A549 (cell line): ENCODE measurements at regions of chr11 and their contacts with region 1.

Region 1: DNA sequence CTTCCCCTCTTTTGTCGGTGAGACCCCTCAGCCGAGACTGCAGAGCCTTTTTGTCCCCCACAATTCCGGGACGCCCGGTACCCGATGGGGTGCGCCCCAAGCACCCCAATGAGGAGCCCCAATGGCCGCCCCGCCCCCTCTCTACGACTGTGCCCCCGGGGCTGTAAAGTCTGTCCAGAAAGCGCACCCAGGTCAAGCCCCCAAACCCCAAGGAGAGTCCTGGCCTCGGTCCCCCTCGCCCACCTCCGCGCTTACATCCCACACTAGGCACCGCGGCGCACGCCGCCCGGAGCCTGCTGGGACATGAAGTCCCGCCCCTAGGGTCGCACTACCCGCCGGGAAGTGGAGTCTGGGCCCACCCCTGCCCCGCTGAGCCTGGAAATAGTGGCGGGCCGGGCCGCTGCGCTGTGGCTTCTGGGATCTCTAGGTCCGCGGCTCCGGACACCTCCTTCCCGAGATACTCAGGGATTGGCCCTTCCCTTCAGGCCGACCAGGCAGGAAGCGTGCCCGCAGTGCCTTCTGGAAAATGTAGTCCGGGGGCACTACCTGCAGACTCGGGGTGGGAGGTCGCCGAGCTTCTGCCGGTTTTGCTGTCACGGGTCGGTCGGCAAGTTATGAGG is at the start of gene MEN1:
- DNase-seq: peak; percentile 96 to 98
- ATAC-seq: peak; percentile 98 to 100
- H3K4me3 ChIP-seq: peak within 1 kb of the TSS; percentile 92
- H3K27ac ChIP-seq: peak within 1 kb of the TSS; percentile 91 to 93
- H3K4me1 ChIP-seq: peaks cover 6% of the 10 kb centered on the region; the same call in 2 of the 3 replicates
- CTCF ChIP-seq: no peak
- EP300 ChIP-seq: no peak
- POLR2A ChIP-seq: peak; percentile 83
- RAD21 ChIP-seq: no peak
- polyA plus RNA-seq, gene MEN1: 17.0 and 18.5 TPM in 2 replicates

Region 2: GRCh38 chr11:64698427-64698826 is 112.0 kb before region 1 on chr11:
- CTCF ChIA-PET with region 1: no interaction called
- POLR2A ChIA-PET with region 1: no interaction called
- DNase-seq: no peak
- ATAC-seq: no peak
- H3K4me3 ChIP-seq: no peak overlapping the region
- H3K27ac ChIP-seq: no peak overlapping the region
- H3K4me1 ChIP-seq: no peaks in the 10 kb centered on the region
- CTCF ChIP-seq: no peak
- EP300 ChIP-seq: no peak
- POLR2A ChIP-seq: no peak
- RAD21 ChIP-seq: no peak

Region 3: DNA sequence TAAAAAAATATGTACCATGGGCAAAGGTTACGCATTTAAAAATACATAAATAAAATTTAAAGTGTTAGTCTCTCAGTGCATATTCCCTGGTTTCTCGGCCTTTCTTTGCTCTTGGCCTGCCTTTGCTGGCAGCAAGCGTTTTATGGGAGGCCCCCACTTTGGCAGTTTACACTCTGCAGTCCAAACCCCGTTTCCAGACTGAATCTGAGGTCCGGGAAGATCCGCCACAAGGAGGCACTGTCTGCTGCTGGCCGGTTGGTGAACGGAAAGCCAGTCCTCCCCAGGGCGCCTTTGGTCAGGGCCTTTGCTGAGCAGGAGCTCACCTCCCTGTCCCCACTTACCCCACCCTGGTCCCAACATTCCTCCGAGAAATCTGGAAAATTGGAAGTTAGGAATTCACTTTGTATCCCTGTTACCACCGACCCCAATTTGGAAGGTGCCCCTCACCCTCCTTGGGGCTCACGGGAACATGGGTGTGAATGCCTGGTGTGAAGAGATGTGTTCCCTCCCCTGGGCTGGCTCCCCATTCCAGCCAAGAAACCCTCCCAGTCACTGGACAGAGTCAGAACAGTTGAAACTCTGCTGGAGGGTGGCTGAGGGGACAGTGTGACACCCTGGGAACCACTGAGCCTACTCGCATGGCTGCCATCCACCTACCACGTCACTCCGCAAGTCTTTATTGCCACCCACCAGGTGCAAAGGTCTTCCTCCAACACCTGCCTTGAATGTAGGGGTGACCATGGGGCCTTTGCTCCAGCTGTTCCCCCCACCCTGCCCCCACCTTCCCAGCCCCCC is 22.7 kb before region 1 on chr11:
- CTCF ChIA-PET with region 1: interaction called, 26 read pairs
- POLR2A ChIA-PET with region 1: no interaction called
- DNase-seq: peak; percentile 72 to 89
- ATAC-seq: peak; percentile 74 to 93
- H3K4me3 ChIP-seq: no peak overlapping the region
- H3K27ac ChIP-seq: peak overlapping the region in 1 of 2 experiments; percentile 39; a peak in 1 of 6 replicates
- H3K4me1 ChIP-seq: no peaks in the 10 kb centered on the region
- CTCF ChIP-seq: peak; percentile 81
- EP300 ChIP-seq: no peak
- POLR2A ChIP-seq: no peak
- RAD21 ChIP-seq: peak; percentile 75 to 84